ENCODE measurements at regions of chrX and their contacts with region 1.

Region 1: DNA sequence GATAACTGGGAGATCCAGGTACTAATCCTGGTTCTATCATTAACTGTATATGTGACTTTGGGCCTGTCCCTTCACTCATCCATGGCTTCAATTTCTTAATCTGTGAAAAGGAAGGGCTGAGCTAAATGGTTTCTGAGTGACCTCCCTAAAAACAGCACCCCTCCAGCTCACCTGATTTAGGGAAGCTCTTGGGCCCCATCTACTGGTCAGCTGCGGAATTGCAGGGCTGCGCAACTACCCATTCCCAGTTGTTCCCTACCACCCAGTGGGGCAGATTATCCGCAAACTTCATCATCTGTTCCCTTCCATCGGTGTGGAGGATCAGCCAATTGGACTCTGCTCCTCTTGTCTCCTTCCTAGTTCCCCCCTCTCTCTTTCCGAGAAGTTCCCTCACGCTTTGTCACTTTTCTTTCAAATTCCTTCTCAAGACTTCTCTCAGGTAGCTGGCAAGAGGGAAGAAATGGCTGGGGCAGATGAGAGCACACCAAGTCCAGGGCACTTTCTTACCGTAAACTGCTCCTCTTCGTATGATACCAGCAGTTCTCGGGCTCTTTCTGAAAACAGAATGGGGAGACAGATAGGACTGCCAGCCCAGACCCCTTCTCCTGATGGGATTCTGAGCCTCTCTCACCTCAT is 5.8 kb downstream of the LAS1L start:
- H3K4me3 Mint-ChIP-seq: no peak overlapping the region
- H3K27ac Mint-ChIP-seq: no peak overlapping the region
- H3K4me1 Mint-ChIP-seq: peaks cover 19% of the 10 kb centered on the region
- H3K27me3 Mint-ChIP-seq: no peaks in the 10 kb centered on the region

Region 2: DNA sequence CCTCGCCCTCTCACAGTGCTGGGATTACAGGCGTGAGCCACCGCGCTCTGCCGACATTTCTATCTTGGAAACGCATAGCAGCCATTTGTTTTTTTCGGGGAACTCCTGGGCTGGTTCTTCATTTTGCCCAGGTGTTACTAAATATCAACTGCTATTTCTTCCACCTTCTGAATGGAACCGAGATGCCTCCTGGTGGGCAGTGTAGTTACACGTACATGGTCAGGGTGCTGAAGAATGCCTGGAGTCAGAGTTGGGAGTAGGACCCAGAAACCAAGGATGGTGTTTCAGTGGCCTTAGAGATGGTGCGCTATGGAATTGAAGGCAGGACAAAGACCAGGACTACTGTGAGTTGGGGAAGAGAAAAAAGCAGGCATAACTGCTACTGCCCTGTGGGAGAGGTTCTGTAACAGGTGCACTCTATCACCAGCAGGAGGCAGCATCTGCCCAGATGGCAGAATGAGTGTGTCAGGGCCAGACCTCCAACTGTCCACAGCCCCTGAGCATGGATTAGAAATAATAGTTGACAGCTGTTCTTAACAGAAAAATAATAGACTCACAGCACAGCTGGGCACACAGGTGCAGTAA is 634.3 kb before region 1 on chrX:
- intact Hi-C with region 1: loop called (anchors 10 kb)
- H3K4me3 Mint-ChIP-seq: no peak overlapping the region
- H3K27ac Mint-ChIP-seq: no peak overlapping the region
- H3K4me1 Mint-ChIP-seq: no peaks in the 10 kb centered on the region
- H3K27me3 Mint-ChIP-seq: no peaks in the 10 kb centered on the region

Region 3: DNA sequence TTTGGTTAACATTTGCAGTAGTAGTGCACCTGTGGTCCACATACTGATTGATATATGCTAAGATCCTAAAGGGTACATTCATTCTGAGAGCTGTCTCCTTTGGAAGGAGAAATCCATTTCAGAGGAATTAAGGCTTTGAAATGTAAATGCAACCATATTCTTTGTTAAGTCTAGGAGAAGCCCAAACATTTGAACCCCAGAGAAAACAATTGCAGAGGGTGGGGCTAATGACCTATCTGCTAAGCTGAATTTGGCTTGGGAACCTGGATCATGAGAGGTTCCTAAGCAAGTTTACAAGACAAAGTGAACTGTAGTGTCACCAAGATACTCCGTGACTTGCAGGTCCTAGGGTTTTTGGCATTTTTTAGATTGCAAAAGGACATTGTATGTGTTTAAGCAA is 35.4 kb before region 1 on chrX:
- intact Hi-C with region 1: no loop called
- H3K4me3 Mint-ChIP-seq: no peak overlapping the region
- H3K27ac Mint-ChIP-seq: no peak overlapping the region
- H3K4me1 Mint-ChIP-seq: no peaks in the 10 kb centered on the region
- H3K27me3 Mint-ChIP-seq: no peaks in the 10 kb centered on the region

Region 4: GRCh38 chrX:65644621-65645270 is 115.9 kb after region 1 on chrX:
- intact Hi-C with region 1: no loop called
- H3K4me3 Mint-ChIP-seq: no peak overlapping the region
- H3K27ac Mint-ChIP-seq: no peak overlapping the region
- H3K4me1 Mint-ChIP-seq: peaks cover 24% of the 10 kb centered on the region
- H3K27me3 Mint-ChIP-seq: no peaks in the 10 kb centered on the region